Heart right ventricle (tissue), 16 donors: ENCODE measurements at regions of chr19 and their contacts with region 1.

Region 1: GRCh38 chr19:46728693-46729676 is 12.1 kb upstream of the PRKD2 start:
- DNase-seq: peak; percentile 77 to 84
- ATAC-seq: peak; percentile 66 to 90 (median 81)
- H3K4me3 ChIP-seq: peak overlapping the region in 2 of 10 donors; percentile 12 to 38
- H3K27ac ChIP-seq: peak overlapping the region in 9 of 10 donors; percentile 23 to 84 (median 77)
- H3K4me1 ChIP-seq: peaks cover 9 to 64% (median 32%) of the 10 kb centered on the region in 9 donors
- H3K27me3 ChIP-seq: no peaks in the 10 kb centered on the region
- CTCF ChIP-seq: peak; percentile 87 to 98 (median 95)

Region 2: DNA sequence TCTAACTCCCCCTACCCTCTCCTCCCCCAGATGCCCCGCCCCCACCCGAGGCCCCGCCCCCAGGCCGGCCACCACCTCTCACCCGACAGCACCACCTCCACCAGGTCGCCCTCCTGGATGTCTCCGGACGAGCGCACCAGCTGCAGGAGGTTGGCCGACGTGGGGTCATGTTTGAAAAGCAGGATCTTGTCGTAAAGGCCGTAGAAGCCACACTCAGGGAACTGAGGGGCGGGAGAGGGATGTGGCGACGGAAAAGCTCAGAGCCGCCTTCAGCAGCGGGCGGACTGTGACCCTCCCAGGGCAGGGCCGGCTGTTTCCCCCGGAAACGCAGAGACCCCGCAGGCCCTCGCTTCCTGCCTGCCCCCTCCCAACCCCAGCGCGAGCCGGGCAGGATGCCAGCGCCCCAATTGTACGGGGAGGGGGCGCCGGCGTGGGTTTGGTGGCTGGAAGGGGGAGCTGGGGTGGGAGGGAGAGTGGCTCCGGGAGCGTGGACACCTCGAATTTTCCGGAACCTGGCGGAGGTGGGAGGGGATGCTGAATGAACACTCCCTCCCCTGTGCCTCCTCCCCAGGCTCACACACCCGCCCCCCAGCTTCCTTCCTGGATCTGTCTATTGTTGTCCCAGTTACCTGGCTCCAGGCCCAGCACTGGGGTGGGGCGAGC is 15.1 kb before region 1 on chr19:
- intact Hi-C with region 1: loop called in 1 of 10 experiments (anchors 1 kb)
- DNase-seq: peak; percentile 89 to 97
- ATAC-seq: peak; percentile 69 to 83 (median 78)
- H3K4me3 ChIP-seq: peak overlapping the region; percentile 26 to 97 (median 76)
- H3K27ac ChIP-seq: peak overlapping the region; percentile 63 to 95 (median 90)
- H3K4me1 ChIP-seq: peaks cover 8 to 53% (median 44%) of the 10 kb centered on the region in 9 donors
- H3K27me3 ChIP-seq: no peaks in the 10 kb centered on the region
- CTCF ChIP-seq: no peak